MCF 10A (cell line): ENCODE measurements at regions of chr13 and their contacts with region 1.

Region 1: DNA sequence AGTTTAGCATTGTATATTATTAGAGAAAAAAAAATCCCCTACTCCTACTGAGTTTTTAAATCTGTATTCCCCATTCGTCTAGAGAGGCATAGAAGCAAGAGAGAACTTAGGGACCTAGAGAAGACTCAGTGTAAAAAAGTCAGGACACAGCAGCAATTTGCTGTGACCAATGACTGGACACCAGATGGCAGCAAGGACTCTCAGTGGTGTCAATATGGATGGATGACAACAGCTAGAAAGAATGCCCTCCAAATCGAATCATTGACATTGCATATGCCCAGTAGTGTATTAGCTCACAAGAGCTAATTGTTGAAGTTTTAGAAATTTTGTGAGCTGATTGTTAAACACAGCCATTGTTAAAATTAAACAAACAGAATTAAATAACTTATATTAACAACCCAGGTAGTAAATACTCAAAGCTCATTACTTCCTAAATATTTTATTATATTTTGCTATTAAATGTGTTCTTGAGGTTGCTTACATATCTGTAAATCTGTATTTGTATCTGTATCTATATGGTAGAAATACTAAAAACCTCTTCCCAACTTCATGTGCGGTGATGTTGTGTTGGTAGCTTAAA is 43.9 kb downstream of the SIAH3 start:
- DNase-seq: peak; percentile 67
- H3K4me3 Mint-ChIP-seq: no peak overlapping the region
- H3K27ac Mint-ChIP-seq: no peak overlapping the region
- H3K4me1 Mint-ChIP-seq: peaks cover 10% of the 10 kb centered on the region
- H3K27me3 Mint-ChIP-seq: no peaks in the 10 kb centered on the region
- CTCF ChIP-seq: peak; percentile 61

Region 2: DNA sequence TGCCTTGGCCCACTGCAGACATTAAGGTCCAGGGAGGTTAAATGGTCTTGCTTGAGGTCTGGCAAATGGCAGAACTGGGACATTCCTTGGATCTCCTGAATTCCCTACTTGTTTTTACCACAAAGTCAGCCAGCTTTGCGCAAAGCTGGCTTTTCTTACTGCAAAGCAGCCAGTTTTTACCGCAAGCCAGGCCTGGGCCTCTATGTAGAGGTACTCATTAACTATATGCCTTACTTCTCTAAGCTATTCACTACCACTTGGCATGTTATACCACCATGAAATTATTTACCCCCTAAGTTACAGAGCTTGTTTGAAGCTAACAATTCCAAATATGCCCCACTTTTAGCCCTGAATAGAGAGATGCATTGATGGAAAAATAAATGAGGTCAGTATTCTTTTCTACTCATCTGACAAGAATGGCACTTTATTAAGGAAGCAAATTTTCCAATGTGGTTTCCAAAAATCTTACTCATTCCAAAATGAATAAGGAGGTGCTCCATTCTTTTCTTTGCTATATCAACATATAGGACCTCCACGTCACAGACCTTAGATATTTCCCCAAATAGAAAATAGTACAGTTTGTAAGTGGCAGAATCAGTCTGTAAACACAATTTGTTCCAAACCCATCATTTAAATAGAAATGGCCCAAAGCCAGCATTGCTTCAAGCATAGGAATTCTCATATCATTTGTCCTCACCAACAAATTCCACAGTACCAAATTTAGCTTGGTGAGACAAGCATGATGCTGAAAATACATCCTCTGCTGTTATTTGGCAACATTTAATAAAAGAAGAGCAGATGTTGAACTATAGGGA is 1087.5 kb before region 1 on chr13:
- CTCF ChIA-PET with region 1: no interaction called
- POLR2A ChIA-PET with region 1: no interaction called
- intact Hi-C with region 1: no loop called
- DNase-seq: no peak
- H3K4me3 Mint-ChIP-seq: no peak overlapping the region
- H3K27ac Mint-ChIP-seq: no peak overlapping the region
- H3K4me1 Mint-ChIP-seq: peaks cover 16% of the 10 kb centered on the region
- H3K27me3 Mint-ChIP-seq: no peaks in the 10 kb centered on the region
- CTCF ChIP-seq: no peak

Region 3: DNA sequence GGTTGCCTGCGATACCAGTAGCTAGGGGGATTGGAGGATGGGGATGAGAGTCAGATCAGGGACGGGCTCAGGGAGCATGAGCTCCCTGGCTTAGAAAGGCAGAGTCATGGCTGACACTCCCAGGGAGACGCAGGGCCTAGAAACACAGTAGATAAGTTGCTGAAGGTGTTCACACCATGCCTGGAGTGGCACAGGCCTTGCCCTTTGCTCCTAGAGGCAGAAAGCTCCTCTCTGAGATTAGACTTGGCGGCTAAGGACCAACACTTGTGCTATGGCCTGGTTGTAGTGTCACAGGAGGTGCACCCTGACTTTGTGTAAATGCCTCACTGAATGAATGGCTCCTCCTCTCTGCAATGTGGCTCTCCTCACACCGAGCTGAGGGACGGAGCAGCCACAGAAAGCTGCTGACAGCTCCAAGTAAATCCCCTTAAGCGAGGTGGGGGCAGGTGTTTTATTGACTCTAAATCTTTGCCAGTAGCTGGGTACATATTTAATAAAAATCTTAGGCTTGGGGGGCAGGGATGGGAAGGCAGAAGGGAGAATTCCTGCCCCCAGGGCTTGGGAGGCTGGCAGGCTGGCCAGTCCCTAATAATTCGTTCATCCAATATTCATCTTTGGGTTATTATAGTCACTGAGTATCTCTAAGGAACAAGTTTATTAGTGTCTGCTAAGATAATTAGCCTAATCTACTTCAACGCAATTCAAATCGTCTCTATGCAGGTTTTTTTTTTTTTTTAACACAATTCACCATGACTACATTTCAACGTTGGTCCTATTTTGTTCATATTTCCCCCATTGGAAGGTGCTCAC is 11.0 kb before region 1 on chr13:
- CTCF ChIA-PET with region 1: interaction called, 16 read pairs
- POLR2A ChIA-PET with region 1: no interaction called
- intact Hi-C with region 1: no loop called
- DNase-seq: no peak
- H3K4me3 Mint-ChIP-seq: no peak overlapping the region
- H3K27ac Mint-ChIP-seq: no peak overlapping the region
- H3K4me1 Mint-ChIP-seq: no peaks in the 10 kb centered on the region
- H3K27me3 Mint-ChIP-seq: no peaks in the 10 kb centered on the region
- CTCF ChIP-seq: no peak

Region 4: DNA sequence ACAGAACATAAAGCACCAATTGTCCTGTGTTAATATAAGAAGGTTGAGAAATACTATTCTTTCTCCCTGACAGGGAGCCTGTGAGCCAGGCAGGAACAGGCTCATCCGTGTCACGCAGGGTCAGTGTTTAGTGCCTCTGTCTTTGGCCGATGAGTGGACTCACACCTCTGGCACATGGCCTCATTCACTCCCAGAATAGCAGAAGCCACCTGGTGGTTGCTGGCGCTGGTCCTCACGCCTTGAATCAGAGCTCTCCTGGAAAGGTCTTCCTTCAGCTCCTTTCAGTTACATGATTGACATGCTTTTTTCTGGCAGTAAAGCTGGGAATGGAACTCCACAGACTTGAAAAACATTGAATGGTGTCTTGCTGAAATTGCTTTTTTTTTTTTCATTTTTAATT is 72.1 kb after region 1 on chr13:
- CTCF ChIA-PET with region 1: interaction called, 27 read pairs
- POLR2A ChIA-PET with region 1: interaction called, 5 read pairs
- intact Hi-C with region 1: loop called (anchors 1 kb)
- DNase-seq: peak; percentile 76
- H3K4me3 Mint-ChIP-seq: no peak overlapping the region
- H3K27ac Mint-ChIP-seq: no peak overlapping the region
- H3K4me1 Mint-ChIP-seq: peaks cover 6% of the 10 kb centered on the region
- H3K27me3 Mint-ChIP-seq: peaks cover 5% of the 10 kb centered on the region
- CTCF ChIP-seq: peak; percentile 40

Region 5: DNA sequence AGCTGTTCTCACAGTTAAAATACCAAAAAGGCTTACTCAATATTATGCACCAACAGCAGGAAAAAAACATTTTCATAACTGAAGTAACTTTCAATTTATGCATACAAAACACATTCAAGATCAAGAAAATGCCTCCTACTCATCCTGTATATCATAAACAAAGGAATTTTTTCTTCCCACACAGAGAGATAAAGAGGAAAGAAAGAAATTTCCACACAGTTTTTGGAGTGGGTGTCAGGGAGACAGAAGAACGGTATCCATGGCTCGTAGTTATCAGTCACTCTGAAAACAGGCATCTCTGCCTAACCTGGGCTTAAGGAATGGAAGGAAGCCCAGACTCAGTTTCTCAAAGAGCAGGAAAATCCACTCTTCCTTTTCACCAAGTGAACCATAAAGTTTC is 136.4 kb after region 1 on chr13:
- CTCF ChIA-PET with region 1: no interaction called
- POLR2A ChIA-PET with region 1: no interaction called
- intact Hi-C with region 1: no loop called
- DNase-seq: no peak
- H3K4me3 Mint-ChIP-seq: no peak overlapping the region
- H3K27ac Mint-ChIP-seq: no peak overlapping the region
- H3K4me1 Mint-ChIP-seq: no peaks in the 10 kb centered on the region
- H3K27me3 Mint-ChIP-seq: no peaks in the 10 kb centered on the region
- CTCF ChIP-seq: no peak

Region 6: GRCh38 chr13:46010148-46010547 is 202.5 kb after region 1 on chr13:
- CTCF ChIA-PET with region 1: interaction called, 7 read pairs
- POLR2A ChIA-PET with region 1: no interaction called
- intact Hi-C with region 1: loop called (anchors 1 kb)
- DNase-seq: peak; percentile 17
- H3K4me3 Mint-ChIP-seq: no peak overlapping the region
- H3K27ac Mint-ChIP-seq: no peak overlapping the region
- H3K4me1 Mint-ChIP-seq: no peaks in the 10 kb centered on the region
- H3K27me3 Mint-ChIP-seq: no peaks in the 10 kb centered on the region
- CTCF ChIP-seq: peak; percentile 11

Region 7: DNA sequence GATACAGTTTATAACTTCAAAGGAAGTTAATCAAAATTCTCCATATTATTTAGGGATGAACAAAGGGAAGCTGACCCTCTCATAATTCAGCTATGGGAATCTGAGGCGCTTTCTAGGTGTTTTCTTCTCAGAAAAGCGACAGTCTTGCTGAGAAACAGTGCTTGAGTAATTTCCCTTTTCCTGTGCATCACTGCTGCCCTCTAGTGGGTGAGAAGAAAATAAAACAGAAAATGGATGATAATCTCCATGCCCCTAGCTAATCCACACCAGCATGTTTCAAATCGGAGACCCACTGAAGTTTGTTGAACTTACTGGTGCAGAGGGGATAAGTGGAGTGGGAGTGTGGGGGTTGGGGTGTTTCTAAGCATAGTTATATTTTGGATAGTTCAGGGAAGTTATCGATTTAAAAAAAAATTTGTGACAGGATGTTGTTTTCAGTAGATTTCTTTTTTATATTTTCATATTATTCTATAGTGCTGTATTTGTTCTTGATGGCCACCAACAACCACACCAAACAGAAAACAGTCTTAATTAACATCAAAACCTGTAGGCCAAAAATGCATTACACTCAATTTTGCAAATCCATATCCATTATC is 353.0 kb after region 1 on chr13:
- CTCF ChIA-PET with region 1: interaction called, 6 read pairs
- POLR2A ChIA-PET with region 1: no interaction called
- intact Hi-C with region 1: loop called (anchors 1 kb)
- DNase-seq: peak; percentile 70
- H3K4me3 Mint-ChIP-seq: no peak overlapping the region
- H3K27ac Mint-ChIP-seq: no peak overlapping the region
- H3K4me1 Mint-ChIP-seq: no peaks in the 10 kb centered on the region
- H3K27me3 Mint-ChIP-seq: peaks cover 54% of the 10 kb centered on the region
- CTCF ChIP-seq: peak; percentile 74